Head of caudate nucleus (tissue), 42 donors: ENCODE measurements at regions of chr11 and their contacts with region 1.

Region 1: DNA sequence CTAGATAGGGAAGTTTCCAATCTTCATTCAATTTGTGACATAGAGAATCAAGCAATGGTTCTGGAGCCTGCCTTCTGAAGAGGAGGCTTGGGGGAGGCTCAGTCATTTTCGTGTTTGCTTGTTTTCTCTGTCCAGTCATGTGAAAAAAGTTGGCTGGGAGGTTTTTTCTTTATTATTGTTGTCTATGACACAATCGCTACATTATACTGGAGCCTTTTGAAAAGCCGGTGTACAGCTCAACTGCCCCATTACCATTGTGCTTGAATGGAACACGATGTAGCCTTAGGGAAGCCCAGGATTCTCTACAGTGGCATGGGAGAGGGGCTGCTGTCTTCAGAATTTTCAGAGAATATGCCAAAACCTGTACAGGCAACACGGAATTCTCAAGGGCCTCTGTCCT is 57.9 kb upstream of the NCAM1 start:
- DNase-seq: peak in 40 of 42 donors; percentile 9 to 86 (median 56)

Region 2: DNA sequence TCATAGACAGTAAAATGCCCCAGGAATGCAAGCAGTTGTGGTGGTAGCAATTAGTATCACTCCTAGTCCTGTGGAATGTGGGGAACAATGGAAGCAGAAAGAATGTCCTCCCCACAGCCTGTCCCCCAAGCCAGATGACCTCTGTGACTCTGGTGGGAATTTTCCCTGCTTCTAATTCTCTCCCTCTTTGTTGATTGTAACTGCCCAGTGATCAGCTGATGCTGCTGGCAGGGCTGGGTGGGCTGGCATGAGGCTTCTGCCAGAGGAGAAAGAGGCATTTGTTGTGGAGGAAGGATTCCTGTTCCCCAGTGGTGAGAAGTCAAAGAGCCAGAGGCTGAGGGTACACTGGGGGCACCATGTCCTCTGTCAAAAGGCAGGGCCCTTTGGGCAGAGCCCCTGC is 58.8 kb before region 1 on chr11:
- intact Hi-C with region 1: loop called (anchors 2 kb)
- DNase-seq: peak; percentile 71 to 97 (median 90)

Region 3: GRCh38 chr11:113006896-113007445 is 103.6 kb after region 1 on chr11:
- intact Hi-C with region 1: no loop called
- DNase-seq: no peak